Activated CD4-positive, alpha-beta T cell treated with anti-CD3 and anti-CD28 coated beads for 36 hours (primary cell): ENCODE measurements at regions of chr1 and their contacts with region 1.

Region 1: GRCh38 chr1:8604041-8604945 is 213.1 kb downstream of the RERE start:
- DNase-seq: peak; percentile 70
- ATAC-seq: peak; percentile 89
- H3K4me3 Mint-ChIP-seq: peak overlapping the region; percentile 66
- H3K27ac Mint-ChIP-seq: peak overlapping the region; percentile 94
- H3K4me1 Mint-ChIP-seq: peaks cover 56% of the 10 kb centered on the region
- H3K27me3 Mint-ChIP-seq: no peaks in the 10 kb centered on the region

Region 2: DNA sequence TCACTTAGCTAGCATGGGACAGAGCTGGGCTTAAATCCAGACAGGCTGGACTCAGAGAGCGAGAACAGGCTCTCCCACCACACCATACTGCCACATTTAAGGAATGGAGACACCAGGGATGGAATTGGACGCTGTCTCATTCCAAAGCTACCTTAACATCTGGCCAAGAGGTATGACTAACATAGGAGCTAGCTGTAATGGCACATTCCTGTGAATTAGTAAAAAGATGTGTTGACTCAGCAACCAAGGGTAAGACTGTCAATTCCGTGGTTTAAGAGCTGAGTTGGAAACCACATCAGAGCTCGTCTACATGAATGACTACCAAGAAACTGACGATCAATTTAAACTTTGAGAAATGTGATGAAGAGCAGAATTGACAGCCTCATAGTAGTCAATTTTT is 655.3 kb before region 1 on chr1:
- CTCF ChIA-PET with region 1: no interaction called
- POLR2A ChIA-PET with region 1: no interaction called
- intact Hi-C with region 1: loop called in 1 of 2 experiments (anchors 1 kb)
- DNase-seq: peak; percentile 50
- ATAC-seq: peak; percentile 92
- H3K4me3 Mint-ChIP-seq: peak overlapping the region; percentile 42
- H3K27ac Mint-ChIP-seq: peak overlapping the region; percentile 80
- H3K4me1 Mint-ChIP-seq: peaks cover 30% of the 10 kb centered on the region
- H3K27me3 Mint-ChIP-seq: no peaks in the 10 kb centered on the region

Region 3: GRCh38 chr1:8525558-8526275 is 78.6 kb before region 1 on chr1:
- CTCF ChIA-PET with region 1: no interaction called
- POLR2A ChIA-PET with region 1: no interaction called
- intact Hi-C with region 1: loop called in 1 of 2 experiments (anchors 1 kb)
- DNase-seq: peak; percentile 85
- ATAC-seq: peak; percentile 94
- H3K4me3 Mint-ChIP-seq: no peak overlapping the region
- H3K27ac Mint-ChIP-seq: no peak overlapping the region
- H3K4me1 Mint-ChIP-seq: peaks cover 24% of the 10 kb centered on the region
- H3K27me3 Mint-ChIP-seq: no peaks in the 10 kb centered on the region

Region 4: DNA sequence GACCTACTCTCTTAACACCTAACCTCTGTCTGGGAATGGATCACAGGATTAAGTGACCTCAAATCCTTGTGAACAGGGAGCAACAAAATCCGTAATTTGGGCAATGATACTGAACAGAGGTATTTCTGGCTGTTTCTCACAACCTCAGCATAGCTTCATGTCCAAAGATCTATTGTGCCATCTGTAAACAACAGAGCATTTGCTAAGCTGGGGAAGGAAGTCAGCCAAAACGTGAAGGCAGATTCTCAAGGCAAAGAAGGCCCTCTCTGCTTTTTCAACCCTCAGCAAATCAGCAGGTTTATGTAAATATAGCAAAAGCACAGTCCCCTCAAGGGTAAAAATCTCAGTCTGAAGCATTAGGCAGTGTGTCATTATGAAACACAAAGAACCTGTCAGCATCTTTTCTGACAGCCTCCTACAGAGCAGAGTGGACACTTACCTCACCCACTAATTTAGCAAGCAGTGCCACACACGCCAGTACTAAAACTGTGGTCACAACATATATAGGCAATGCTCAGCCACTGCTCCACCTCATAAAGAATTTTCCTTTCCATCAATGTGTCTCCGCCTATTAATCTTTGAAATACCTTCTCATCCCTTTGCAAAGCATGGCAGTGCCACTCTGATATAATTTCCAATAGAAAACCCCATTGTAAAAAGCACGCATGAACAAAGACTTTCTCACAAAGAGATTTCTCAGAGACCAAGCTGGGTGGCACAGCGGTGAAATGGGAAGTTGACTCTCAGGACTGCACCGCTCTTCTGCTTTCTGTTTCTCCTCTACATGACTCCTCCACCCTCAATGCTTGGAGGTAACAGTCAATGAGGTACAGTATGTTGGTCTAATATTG is 25.2 kb after region 1 on chr1:
- CTCF ChIA-PET with region 1: no interaction called
- POLR2A ChIA-PET with region 1: no interaction called
- intact Hi-C with region 1: loop called in 1 of 2 experiments (anchors 2 kb)
- DNase-seq: peak; percentile 29
- ATAC-seq: peak; percentile 91
- H3K4me3 Mint-ChIP-seq: no peak overlapping the region
- H3K27ac Mint-ChIP-seq: peak overlapping the region; percentile 38
- H3K4me1 Mint-ChIP-seq: peaks cover 50% of the 10 kb centered on the region
- H3K27me3 Mint-ChIP-seq: no peaks in the 10 kb centered on the region

Region 5: GRCh38 chr1:8671306-8671917 is 67.1 kb after region 1 on chr1:
- CTCF ChIA-PET with region 1: interaction called, 4 read pairs
- POLR2A ChIA-PET with region 1: no interaction called
- intact Hi-C with region 1: loop called (anchors 1 to 2 kb)
- DNase-seq: peak; percentile 26
- ATAC-seq: no peak
- H3K4me3 Mint-ChIP-seq: no peak overlapping the region
- H3K27ac Mint-ChIP-seq: no peak overlapping the region
- H3K4me1 Mint-ChIP-seq: peaks cover 62% of the 10 kb centered on the region
- H3K27me3 Mint-ChIP-seq: no peaks in the 10 kb centered on the region

Region 6: GRCh38 chr1:8903908-8904650 is 299.8 kb after region 1 on chr1:
- CTCF ChIA-PET with region 1: no interaction called
- POLR2A ChIA-PET with region 1: no interaction called
- intact Hi-C with region 1: loop called in 1 of 2 experiments (anchors 1 kb)
- DNase-seq: no peak
- ATAC-seq: no peak
- H3K4me3 Mint-ChIP-seq: no peak overlapping the region
- H3K27ac Mint-ChIP-seq: peak overlapping the region; percentile 48
- H3K4me1 Mint-ChIP-seq: peaks cover 46% of the 10 kb centered on the region
- H3K27me3 Mint-ChIP-seq: no peaks in the 10 kb centered on the region